Mammary epithelial cell (primary cell): ENCODE measurements at regions of chr16 and their contacts with region 1.

Region 1: GRCh38 chr16:3625911-3626732 is 14.7 kb upstream of the SLX4 start:
- DNase-seq: no peak
- H3K4me3 ChIP-seq: no peak overlapping the region
- H3K27ac ChIP-seq: no peak overlapping the region
- H3K4me1 ChIP-seq: no peaks in the 10 kb centered on the region
- H3K27me3 ChIP-seq: no peaks in the 10 kb centered on the region
- CTCF ChIP-seq: no peak

Region 2: GRCh38 chr16:3530371-3530914 is 95.7 kb before region 1 on chr16:
- CTCF ChIA-PET with region 1: no interaction called
- dilution Hi-C with region 1: no loop called
- in situ Hi-C with region 1: no loop called
- intact Hi-C with region 1: no loop called
- DNase-seq: peak; percentile 62
- H3K4me3 ChIP-seq: no peak overlapping the region
- H3K27ac ChIP-seq: no peak overlapping the region
- H3K4me1 ChIP-seq: no peaks in the 10 kb centered on the region
- H3K27me3 ChIP-seq: no peaks in the 10 kb centered on the region
- CTCF ChIP-seq: no peak

Region 3: GRCh38 chr16:3587547-3588110 is 38.5 kb before region 1 on chr16:
- CTCF ChIA-PET with region 1: interaction called, 16 read pairs
- dilution Hi-C with region 1: no loop called
- in situ Hi-C with region 1: no loop called
- intact Hi-C with region 1: no loop called
- DNase-seq: no peak
- H3K4me3 ChIP-seq: no peak overlapping the region
- H3K27ac ChIP-seq: no peak overlapping the region
- H3K4me1 ChIP-seq: no peaks in the 10 kb centered on the region
- H3K27me3 ChIP-seq: no peaks in the 10 kb centered on the region
- CTCF ChIP-seq: no peak

Region 4: DNA sequence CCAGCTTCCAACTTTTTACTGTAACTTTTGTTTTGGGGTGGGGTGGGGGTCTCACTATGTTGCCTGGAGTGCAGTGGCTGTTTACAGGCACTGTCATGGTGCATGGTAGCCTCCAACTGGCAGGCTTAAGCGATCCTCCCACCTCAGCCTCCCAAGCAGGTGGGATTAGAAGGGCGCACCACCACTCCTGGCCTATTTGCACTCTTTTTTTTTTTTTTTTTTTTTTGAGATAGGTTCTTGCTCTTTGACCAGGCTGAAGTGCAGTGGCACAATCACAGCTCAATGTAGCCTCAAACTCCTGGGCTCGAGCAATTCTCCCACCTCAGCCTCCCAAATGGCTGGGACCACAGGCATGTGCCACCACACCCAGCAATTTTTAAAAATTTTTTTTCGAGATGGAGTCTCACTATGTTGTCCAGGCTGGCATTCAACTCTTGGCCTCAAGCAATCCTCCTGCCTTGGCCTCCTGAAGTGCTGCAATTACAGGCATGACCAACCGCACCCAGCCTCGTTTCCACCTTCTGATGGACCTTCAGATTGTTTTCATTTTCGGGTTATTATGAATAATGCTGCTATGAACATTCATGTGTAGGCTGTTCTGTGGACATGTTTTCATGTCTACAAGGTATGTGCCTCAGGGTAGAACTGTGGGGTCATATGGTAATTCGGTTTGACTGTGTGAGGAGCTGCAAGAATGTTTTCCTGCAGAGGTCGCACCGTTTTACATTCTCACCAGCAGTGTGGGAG is 80.3 kb after region 1 on chr16:
- CTCF ChIA-PET with region 1: no interaction called
- dilution Hi-C with region 1: no loop called
- in situ Hi-C with region 1: no loop called
- intact Hi-C with region 1: no loop called
- DNase-seq: no peak
- H3K4me3 ChIP-seq: no peak overlapping the region
- H3K27ac ChIP-seq: no peak overlapping the region
- H3K4me1 ChIP-seq: no peaks in the 10 kb centered on the region
- H3K27me3 ChIP-seq: no peaks in the 10 kb centered on the region
- CTCF ChIP-seq: no peak

Region 5: GRCh38 chr16:4232541-4233386 is 606.6 kb after region 1 on chr16:
- CTCF ChIA-PET with region 1: interaction called, 13 read pairs
- dilution Hi-C with region 1: no loop called
- in situ Hi-C with region 1: no loop called
- intact Hi-C with region 1: no loop called
- DNase-seq: peak; percentile 6
- H3K4me3 ChIP-seq: no peak overlapping the region
- H3K27ac ChIP-seq: no peak overlapping the region
- H3K4me1 ChIP-seq: no peaks in the 10 kb centered on the region
- H3K27me3 ChIP-seq: peaks cover 5% of the 10 kb centered on the region
- CTCF ChIP-seq: no peak